ENCODE measurements at regions of chr17 and their contacts with region 1.

Region 1: DNA sequence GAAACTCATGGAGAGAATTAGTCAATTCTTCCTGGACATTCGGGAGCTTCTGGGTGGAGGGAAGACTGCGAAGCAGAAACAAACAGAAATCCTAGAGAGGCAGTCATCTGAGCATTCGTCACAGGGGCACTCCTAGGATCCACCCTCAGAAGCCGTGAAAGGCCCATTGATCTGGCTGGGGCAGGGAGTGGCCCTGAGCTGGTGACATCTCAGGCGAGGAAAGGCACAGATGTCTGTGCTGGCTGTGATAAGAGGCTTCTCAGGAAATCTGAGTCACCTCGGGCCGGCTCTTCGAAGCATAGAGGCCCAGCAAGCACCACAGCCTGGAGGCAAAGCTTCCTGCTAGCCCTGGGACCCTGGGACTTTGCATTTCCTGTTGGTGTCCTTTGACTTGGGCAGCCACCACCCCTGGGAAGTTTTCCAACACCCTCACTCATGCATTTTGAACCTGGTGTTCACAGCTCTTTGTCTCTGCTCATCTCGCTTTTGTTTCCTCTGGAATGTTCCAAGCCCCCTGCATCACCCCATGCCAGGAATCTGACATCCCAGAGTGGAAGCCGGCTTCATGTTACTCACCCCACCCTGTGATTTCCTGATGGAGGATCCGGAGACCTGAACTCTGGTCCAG is 23.3 kb upstream of the CDRT4 start:
- DNase-seq: peak; percentile 92

Region 2: GRCh38 chr17:15134363-15134762 is 356.4 kb before region 1 on chr17:
- in situ Hi-C with region 1: no loop called
- DNase-seq: no peak

Region 3: DNA sequence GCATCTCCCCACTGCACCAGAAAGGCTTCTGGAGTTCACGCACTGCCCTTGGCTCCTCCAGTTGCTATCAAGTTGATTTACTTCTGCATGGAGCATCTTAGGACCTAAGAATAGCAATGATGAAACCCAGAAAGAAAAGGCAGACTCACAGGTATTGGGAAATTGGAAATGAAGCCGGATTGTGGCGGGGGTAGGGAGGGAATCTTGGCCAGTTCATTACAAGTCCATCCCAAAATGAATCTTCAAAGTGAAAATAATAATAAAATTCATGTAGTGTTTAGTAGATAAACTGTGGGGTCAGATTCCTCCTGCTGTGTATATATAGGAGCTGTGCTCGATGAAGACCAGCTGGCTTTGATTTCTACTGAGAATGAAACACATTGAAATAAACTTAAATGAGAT is 183.0 kb before region 1 on chr17:
- in situ Hi-C with region 1: no loop called
- DNase-seq: no peak

Region 4: GRCh38 chr17:15377616-15378015 is 113.1 kb before region 1 on chr17:
- in situ Hi-C with region 1: loop called (anchors 25 kb)
- DNase-seq: peak; percentile 99